ENCODE measurements at regions of chr3 and their contacts with region 1.

Region 1: GRCh38 chr3:130746246-130747039 is at the start of gene PIK3R4:
- DNase-seq: peak; percentile 94
- H3K4me3 Mint-ChIP-seq: peak within 1 kb of the TSS; percentile 90
- H3K27ac Mint-ChIP-seq: peak within 1 kb of the TSS; percentile 97
- H3K4me1 Mint-ChIP-seq: peaks cover 42% of the 10 kb centered on the region
- H3K27me3 Mint-ChIP-seq: no peaks in the 10 kb centered on the region
- total RNA-seq, gene PIK3R4: 33.1 and 35.4 TPM in 2 replicates

Region 2: DNA sequence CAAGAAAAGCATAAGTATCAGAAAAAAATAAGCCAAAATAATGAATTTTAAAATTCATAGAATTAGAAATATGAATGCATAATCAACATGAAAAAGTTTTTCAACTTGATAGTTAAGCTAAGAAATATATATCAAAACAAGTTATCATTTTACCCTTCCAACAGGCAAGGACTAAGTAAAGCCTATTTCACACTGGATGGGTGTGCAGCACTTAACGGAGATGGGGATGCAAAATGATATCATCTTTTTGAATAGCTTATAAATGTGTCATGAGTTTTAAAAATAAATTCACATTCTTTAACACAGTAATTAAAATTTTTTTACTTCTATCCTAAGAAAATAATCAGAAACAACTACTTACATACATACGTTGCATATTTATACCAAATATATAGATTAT is 20.7 kb before region 1 on chr3:
- intact Hi-C with region 1: loop called (anchors 2 kb)
- DNase-seq: no peak
- H3K4me3 Mint-ChIP-seq: no peak overlapping the region
- H3K27ac Mint-ChIP-seq: no peak overlapping the region
- H3K4me1 Mint-ChIP-seq: peaks cover 5% of the 10 kb centered on the region
- H3K27me3 Mint-ChIP-seq: no peaks in the 10 kb centered on the region

Region 3: DNA sequence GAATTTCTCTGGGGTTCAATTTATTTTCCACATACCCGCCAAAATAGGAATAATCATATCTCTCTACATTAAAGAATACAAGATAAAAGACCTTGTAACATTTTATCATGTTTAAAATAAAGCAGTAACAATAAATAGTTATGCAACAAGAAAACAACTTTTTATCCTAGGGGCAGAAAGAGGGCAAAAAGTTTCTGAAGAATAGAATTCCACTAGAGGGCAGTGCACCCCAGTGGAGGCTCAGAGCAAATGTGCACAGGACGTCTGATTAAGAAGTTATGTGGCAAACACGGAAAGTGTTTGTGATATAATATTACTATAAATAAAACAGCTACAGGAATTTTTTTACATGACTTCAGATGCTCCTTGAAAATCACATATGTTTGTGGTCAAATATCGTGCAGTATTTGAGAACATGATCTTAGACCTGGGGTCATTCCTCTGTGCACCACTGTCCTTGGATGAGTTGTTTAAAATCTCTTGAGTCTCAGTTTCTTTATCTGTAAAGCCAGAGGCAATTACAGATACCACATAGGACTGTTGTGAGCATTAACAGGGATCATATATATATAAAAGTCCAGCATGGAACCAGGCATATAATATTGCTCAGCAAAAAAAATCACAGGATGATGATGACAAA is 13.4 kb after region 1 on chr3:
- intact Hi-C with region 1: loop called (anchors 1 kb)
- DNase-seq: peak; percentile 43
- H3K4me3 Mint-ChIP-seq: no peak overlapping the region
- H3K27ac Mint-ChIP-seq: no peak overlapping the region
- H3K4me1 Mint-ChIP-seq: peaks cover 29% of the 10 kb centered on the region
- H3K27me3 Mint-ChIP-seq: peaks cover 7% of the 10 kb centered on the region

Region 4: DNA sequence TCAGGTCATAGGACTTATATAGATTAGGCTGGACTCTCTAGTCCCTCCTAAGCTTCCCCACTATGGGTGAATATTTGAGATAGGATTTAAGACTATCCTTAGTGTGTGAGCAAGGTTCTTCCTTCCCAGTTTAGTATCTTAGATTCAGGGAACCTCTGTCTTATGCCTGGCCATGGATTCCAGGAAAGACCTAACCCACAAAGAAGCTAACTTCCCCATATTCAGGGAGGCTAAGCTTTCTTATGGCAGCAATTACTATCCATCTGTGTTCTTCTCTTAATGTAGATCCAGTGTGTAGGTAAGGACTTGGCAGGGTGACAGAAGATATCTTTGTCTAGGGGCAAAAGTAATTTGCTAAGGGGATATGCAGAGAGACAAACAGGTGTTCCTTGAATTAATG is 25.7 kb after region 1 on chr3:
- intact Hi-C with region 1: no loop called
- DNase-seq: no peak
- H3K4me3 Mint-ChIP-seq: no peak overlapping the region
- H3K27ac Mint-ChIP-seq: no peak overlapping the region
- H3K4me1 Mint-ChIP-seq: no peaks in the 10 kb centered on the region
- H3K27me3 Mint-ChIP-seq: peaks cover 15% of the 10 kb centered on the region

Region 5: GRCh38 chr3:130787422-130788068 is 41.1 kb after region 1 on chr3:
- intact Hi-C with region 1: no loop called
- DNase-seq: no peak
- H3K4me3 Mint-ChIP-seq: no peak overlapping the region
- H3K27ac Mint-ChIP-seq: no peak overlapping the region
- H3K4me1 Mint-ChIP-seq: no peaks in the 10 kb centered on the region
- H3K27me3 Mint-ChIP-seq: peaks cover 20% of the 10 kb centered on the region

Region 6: GRCh38 chr3:130850044-130850797 is 103.8 kb after region 1 on chr3:
- intact Hi-C with region 1: loop called (anchors 1 kb)
- DNase-seq: peak; percentile 61
- H3K4me3 Mint-ChIP-seq: peak overlapping the region; percentile 1
- H3K27ac Mint-ChIP-seq: peak overlapping the region; percentile 71
- H3K4me1 Mint-ChIP-seq: peaks cover 41% of the 10 kb centered on the region
- H3K27me3 Mint-ChIP-seq: peaks cover 26% of the 10 kb centered on the region

Region 7: DNA sequence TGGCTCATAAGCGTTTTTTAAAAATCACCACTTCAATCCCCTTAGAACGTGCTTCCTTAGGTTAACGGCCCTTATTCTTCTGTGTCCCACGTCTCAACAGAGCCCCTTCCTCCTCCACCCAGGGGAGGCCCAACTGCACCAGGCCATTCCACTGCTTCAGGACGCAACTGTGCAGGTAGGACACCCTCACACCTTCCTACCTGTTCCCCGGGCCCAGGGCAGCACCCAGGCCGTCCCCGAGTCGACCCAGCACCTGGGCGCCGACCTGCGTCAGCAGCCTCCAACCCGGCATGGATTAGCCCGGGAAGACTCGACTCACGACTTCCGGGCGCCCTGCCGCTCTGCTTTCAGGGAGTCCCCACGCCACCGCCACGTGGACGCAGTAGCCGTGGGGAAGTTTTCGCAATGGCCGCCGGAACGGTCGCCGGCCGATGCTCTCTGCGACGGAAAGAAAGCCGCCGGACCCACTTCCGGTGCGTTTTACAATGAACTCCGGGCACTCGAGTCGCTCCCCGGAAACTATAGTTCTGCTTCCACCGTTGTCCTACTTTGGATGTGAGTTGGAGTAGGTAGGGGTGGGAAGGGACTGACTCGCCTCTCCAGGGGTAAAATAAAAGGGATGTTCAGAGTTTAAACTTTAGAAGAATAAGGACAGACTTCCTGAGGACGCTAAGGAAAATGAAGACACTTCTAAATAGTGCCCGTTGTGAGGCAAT is 756.2 kb after region 1 on chr3 and contains the start of gene MRPL3:
- intact Hi-C with region 1: loop called (anchors 1 kb)
- DNase-seq: peak; percentile 78
- H3K4me3 Mint-ChIP-seq: peak within 1 kb of the TSS; percentile 100
- H3K27ac Mint-ChIP-seq: peak within 1 kb of the TSS; percentile 95
- H3K4me1 Mint-ChIP-seq: peaks cover 50% of the 10 kb centered on the region
- H3K27me3 Mint-ChIP-seq: peaks cover 4% of the 10 kb centered on the region
- total RNA-seq, gene MRPL3: 166 and 175 TPM in 2 replicates

Measured in activated T-helper 1 cell treated with anti-CD3 and anti-CD28 coated beads, Interleukin-12 subunit alpha, Interleukin-12 subunit beta, Interleukin-2, Interleukin-4 antibody, amounts not matched to agents 30 ng/mL and 10 ng/mL and 1 ng/mL, durations not matched to agents 14 hours and 24 hours and 36 hours (primary cell).